ENCODE measurements at regions of chr18 and their contacts with region 1.

Region 1: GRCh38 chr18:9971313-9971920 is 57.6 kb downstream of the VAPA start:
- DNase-seq: peak; percentile 86
- H3K4me3 ChIP-seq: no peak overlapping the region
- H3K27ac ChIP-seq: no peak overlapping the region
- H3K4me1 ChIP-seq: no peaks in the 10 kb centered on the region
- H3K27me3 ChIP-seq: no peaks in the 10 kb centered on the region
- CTCF ChIP-seq: peak; percentile 62 to 90 (median 88)
- POLR2A ChIP-seq: no peak

Region 2: GRCh38 chr18:9766076-9766481 is 205.3 kb before region 1 on chr18:
- intact Hi-C with region 1: no loop called
- DNase-seq: no peak
- H3K4me3 ChIP-seq: no peak overlapping the region
- H3K27ac ChIP-seq: no peak overlapping the region
- H3K4me1 ChIP-seq: no peaks in the 10 kb centered on the region
- H3K27me3 ChIP-seq: no peaks in the 10 kb centered on the region
- CTCF ChIP-seq: no peak
- POLR2A ChIP-seq: no peak

Region 3: GRCh38 chr18:10006311-10006893 is 35.0 kb after region 1 on chr18:
- intact Hi-C with region 1: loop called (anchors 5 kb)
- DNase-seq: no peak
- H3K4me3 ChIP-seq: no peak overlapping the region
- H3K27ac ChIP-seq: no peak overlapping the region
- H3K4me1 ChIP-seq: no peaks in the 10 kb centered on the region
- H3K27me3 ChIP-seq: no peaks in the 10 kb centered on the region
- CTCF ChIP-seq: peak in 2 of 4 experiments; percentile 20 to 25
- POLR2A ChIP-seq: no peak

Measured in prostate gland (tissue), 2 donors.